Gastrocnemius medialis (tissue), 4 donors: ENCODE measurements at regions of chr6 and their contacts with region 1.

Region 1: GRCh38 chr6:125749173-125749864 is at the start of gene HEY2:
- DNase-seq: peak; percentile 92 to 94
- ATAC-seq: peak; percentile 55 to 65
- H3K4me3 ChIP-seq: peak within 1 kb of the TSS; percentile 73 to 86 (median 85)
- H3K27ac ChIP-seq: peak within 1 kb of the TSS; percentile 89 to 99 (median 94)
- H3K4me1 ChIP-seq: peaks cover 11 to 30% of the 10 kb centered on the region in 2 donors
- H3K27me3 ChIP-seq: no peaks in the 10 kb centered on the region
- CTCF ChIP-seq: peak in 3 of 5 experiments; percentile 43 to 51 (median 48)
- POLR2A ChIP-seq: peak; percentile 92 to 97
- total RNA-seq, gene HEY2: 5.9 to 9.0 (median 7.4) TPM

Region 2: GRCh38 chr6:124961777-124962611 is 787.3 kb before region 1 on chr6 and contains the start of gene RNF217:
- in situ Hi-C with region 1: no loop called
- intact Hi-C with region 1: loop called (anchors 5 kb)
- DNase-seq: peak; percentile 29 to 59
- ATAC-seq: peak; percentile 34 to 39
- H3K4me3 ChIP-seq: peak within 1 kb of the TSS; percentile 72 to 87 (median 81)
- H3K27ac ChIP-seq: peak within 1 kb of the TSS; percentile 83 to 92 (median 90)
- H3K4me1 ChIP-seq: peaks cover 34 to 43% of the 10 kb centered on the region in 2 donors
- H3K27me3 ChIP-seq: no peaks in the 10 kb centered on the region
- CTCF ChIP-seq: peak in 1 of 5 experiments; percentile 10
- POLR2A ChIP-seq: peak; percentile 50 to 54
- total RNA-seq, gene RNF217: 4.5 to 15.5 (median 12.4) TPM

Region 3: DNA sequence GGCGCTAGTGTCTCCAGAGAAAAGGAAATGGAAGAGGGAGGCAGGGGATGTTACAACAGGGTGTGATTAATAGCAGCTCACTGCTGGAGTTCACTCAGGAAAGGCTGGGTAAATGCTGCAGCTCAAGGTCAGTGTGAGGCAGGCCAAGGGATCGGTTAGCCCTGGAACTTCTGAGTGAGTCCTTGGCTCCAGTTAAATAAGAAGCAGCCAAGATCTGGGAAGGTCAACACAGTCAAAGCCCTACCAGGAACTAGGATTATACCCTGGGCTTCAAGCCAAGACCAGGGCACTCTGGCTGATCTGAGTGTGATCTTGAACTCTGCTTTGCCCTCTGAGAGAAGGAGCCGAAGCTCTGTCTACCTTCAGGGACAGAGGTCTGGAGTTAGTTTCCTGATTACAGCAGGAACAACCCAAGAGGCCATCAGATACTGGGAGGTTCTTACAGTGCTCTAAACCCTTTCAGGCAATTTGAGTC is 551.5 kb before region 1 on chr6:
- in situ Hi-C with region 1: no loop called
- intact Hi-C with region 1: loop called (anchors 5 kb)
- DNase-seq: peak; percentile 88 to 96
- ATAC-seq: peak; percentile 88 to 90
- H3K4me3 ChIP-seq: peak overlapping the region in 3 of 4 donors; percentile 3 to 25 (median 6)
- H3K27ac ChIP-seq: peak overlapping the region; percentile 90 to 94 (median 92)
- H3K4me1 ChIP-seq: peaks cover 98 to 99% of the 10 kb centered on the region in 2 donors
- H3K27me3 ChIP-seq: no peaks in the 10 kb centered on the region
- CTCF ChIP-seq: no peak
- POLR2A ChIP-seq: no peak

Region 4: GRCh38 chr6:125507987-125508655 is 241.2 kb before region 1 on chr6:
- in situ Hi-C with region 1: no loop called
- intact Hi-C with region 1: loop called (anchors 5 kb)
- DNase-seq: no peak
- ATAC-seq: no peak
- H3K4me3 ChIP-seq: no peak overlapping the region
- H3K27ac ChIP-seq: no peak overlapping the region
- H3K4me1 ChIP-seq: no peaks in the 10 kb centered on the region
- H3K27me3 ChIP-seq: no peaks in the 10 kb centered on the region
- CTCF ChIP-seq: no peak
- POLR2A ChIP-seq: no peak

Region 5: GRCh38 chr6:125598422-125598821 is 150.9 kb before region 1 on chr6:
- in situ Hi-C with region 1: loop called in 2 of 4 experiments (anchors 10 to 25 kb)
- intact Hi-C with region 1: loop called (anchors 1 kb)
- DNase-seq: peak; percentile 83 to 95
- ATAC-seq: peak; percentile 97 to 98
- H3K4me3 ChIP-seq: peak overlapping the region in 3 of 4 donors; percentile 20 to 39 (median 30)
- H3K27ac ChIP-seq: peak overlapping the region; percentile 84 to 95 (median 90)
- H3K4me1 ChIP-seq: peaks cover 29 to 30% of the 10 kb centered on the region in 2 donors
- H3K27me3 ChIP-seq: no peaks in the 10 kb centered on the region
- CTCF ChIP-seq: no peak
- POLR2A ChIP-seq: peak in 1 of 2 donors; percentile 21